Common myeloid progenitor, CD34-positive (primary cell): ENCODE measurements at regions of chrX and their contacts with region 1.

Region 1: GRCh38 chrX:123871309-123871708 is 11.5 kb downstream of the XIAP start:
- DNase-seq: no peak
- H3K4me3 ChIP-seq: no peak overlapping the region
- H3K27ac ChIP-seq: no peak overlapping the region
- H3K4me1 ChIP-seq: peaks cover 0 to 7% (median 4%) of the 10 kb centered on the region in 4 experiments
- H3K27me3 ChIP-seq: no peaks in the 10 kb centered on the region

Region 2: GRCh38 chrX:123788744-123789143 is 82.6 kb before region 1 on chrX:
- CTCF ChIA-PET with region 1: no interaction called
- POLR2A ChIA-PET with region 1: interaction called, 11 read pairs
- DNase-seq: no peak
- H3K4me3 ChIP-seq: no peak overlapping the region
- H3K27ac ChIP-seq: no peak overlapping the region
- H3K4me1 ChIP-seq: peaks cover 0 to 2% (median 0%) of the 10 kb centered on the region in 4 experiments
- H3K27me3 ChIP-seq: no peaks in the 10 kb centered on the region

Region 3: GRCh38 chrX:123949846-123950245 is 78.5 kb after region 1 on chrX:
- CTCF ChIA-PET with region 1: no interaction called
- POLR2A ChIA-PET with region 1: no interaction called
- DNase-seq: no peak
- H3K4me3 ChIP-seq: no peak overlapping the region
- H3K27ac ChIP-seq: no peak overlapping the region
- H3K4me1 ChIP-seq: no peaks in the 10 kb centered on the region
- H3K27me3 ChIP-seq: no peaks in the 10 kb centered on the region